Mammary epithelial cell (primary cell): ENCODE measurements at regions of chr1 and their contacts with region 1.

Region 1: DNA sequence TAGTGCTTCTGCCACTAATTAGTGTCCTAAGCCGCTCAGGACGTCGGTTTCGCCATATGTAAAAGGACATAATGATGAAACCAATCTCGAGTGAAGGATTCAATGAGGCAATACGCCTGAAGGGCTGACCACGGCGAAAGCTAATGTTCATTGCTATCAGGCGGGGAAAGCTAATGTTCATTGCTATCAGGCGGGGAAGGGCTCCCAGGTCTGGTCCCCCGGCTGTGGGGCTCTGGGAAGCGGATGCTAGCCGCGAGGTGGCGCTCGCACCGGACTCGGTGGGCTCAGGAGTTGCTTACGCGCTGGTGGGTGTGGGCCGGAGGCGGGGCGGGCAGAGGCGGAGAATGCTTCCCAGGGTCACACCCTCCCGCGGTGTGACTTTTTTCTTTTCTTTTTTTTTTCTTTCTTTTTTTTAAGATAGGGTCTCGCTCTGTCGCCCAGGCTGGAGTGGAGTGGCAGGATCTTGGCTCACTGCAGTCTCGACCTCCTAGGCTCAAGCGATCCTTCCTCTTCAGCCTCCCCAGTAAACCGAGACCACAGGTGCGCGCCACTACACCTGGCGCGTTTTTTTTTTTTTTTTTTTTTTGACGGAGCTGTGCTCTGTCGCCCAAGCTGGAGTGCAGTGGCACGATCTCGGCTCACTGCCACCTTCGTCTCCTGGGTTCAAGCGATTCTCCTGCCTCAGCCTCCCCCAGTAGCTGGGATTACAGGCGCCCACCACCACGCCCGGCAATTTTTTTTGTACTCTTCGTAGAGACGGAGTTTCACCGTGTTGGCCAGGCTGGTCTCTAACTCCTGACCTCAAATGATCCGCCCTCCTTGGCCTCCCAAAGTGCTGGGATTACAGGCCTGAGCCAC is 1.1 kb upstream of the PEAR1 start:
- DNase-seq: peak; percentile 61
- H3K4me3 ChIP-seq: peak overlapping the region; percentile 7 to 43 (median 11)
- H3K27ac ChIP-seq: no peak overlapping the region
- H3K4me1 ChIP-seq: peaks cover 30% of the 10 kb centered on the region
- H3K27me3 ChIP-seq: no peaks in the 10 kb centered on the region
- CTCF ChIP-seq: peak; percentile 63 to 84

Region 2: GRCh38 chr1:156689035-156689952 is 203.1 kb before region 1 on chr1:
- CTCF ChIA-PET with region 1: interaction called, 4 read pairs
- dilution Hi-C with region 1: no loop called
- in situ Hi-C with region 1: no loop called
- intact Hi-C with region 1: loop called (anchors 1 kb)
- DNase-seq: peak; percentile 77
- H3K4me3 ChIP-seq: peak overlapping the region in 1 of 3 experiments; percentile 27
- H3K27ac ChIP-seq: no peak overlapping the region
- H3K4me1 ChIP-seq: peaks cover 49% of the 10 kb centered on the region
- H3K27me3 ChIP-seq: no peaks in the 10 kb centered on the region
- CTCF ChIP-seq: peak; percentile 85 to 94

Region 3: DNA sequence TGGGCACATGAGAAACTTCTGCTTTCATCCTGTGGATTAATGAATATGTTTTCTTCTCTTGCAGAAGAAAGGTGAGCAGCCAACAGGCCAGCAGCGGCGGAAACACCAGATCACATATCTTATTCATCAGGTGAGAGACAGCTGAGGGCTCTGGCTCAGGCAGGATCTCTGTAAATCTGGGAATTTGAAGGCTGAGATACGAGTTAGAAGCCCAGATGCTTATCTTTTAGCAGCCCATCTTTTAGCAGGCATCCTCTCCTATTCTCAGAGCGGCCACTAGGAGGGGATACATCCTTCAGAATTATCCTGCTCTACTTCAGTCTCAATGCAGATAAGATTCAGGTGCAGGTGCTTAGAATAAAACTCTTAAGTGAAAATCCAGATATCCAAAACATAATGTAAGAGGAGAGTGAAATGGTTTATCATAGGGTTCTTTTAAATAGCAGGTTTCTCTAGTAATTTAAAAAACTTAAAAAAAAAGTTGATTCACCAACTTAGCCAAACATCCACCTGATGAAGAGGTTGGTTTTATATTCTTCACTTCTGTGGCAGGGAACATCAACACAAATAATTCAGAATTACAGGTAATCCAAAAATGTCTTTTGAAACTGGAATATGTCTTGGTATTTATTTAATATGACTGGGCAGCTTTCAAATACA is 95.1 kb before region 1 on chr1:
- CTCF ChIA-PET with region 1: no interaction called
- dilution Hi-C with region 1: no loop called
- in situ Hi-C with region 1: no loop called
- intact Hi-C with region 1: loop called (anchors 1 kb)
- DNase-seq: peak; percentile 47
- H3K4me3 ChIP-seq: no peak overlapping the region
- H3K27ac ChIP-seq: no peak overlapping the region
- H3K4me1 ChIP-seq: no peaks in the 10 kb centered on the region
- H3K27me3 ChIP-seq: no peaks in the 10 kb centered on the region
- CTCF ChIP-seq: peak; percentile 83 to 94

Region 4: DNA sequence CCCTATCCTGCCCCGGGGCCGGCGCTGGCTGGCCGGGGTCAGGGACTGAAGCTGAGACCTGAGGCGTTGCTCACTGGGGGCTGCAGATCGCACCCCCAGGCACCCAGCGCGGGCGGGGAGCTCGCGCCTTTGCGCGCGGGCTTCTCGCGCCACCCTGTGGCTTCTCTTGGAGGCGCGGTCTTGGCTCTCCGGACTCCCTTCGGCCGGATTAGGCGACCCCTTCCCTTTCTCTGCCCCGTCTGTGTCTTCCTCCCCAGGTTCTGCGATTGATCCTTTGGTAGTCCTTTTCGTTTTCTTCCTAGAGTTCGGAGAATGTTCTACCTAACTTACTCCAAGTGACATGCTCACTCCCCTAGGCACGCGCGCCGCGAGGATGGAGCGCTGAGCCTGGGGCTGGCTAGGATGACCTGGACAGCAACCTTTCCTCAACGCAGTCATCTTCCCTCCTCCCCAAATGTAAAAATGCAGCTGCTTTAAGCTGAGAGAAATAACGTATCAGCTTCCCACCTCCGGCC is 32.2 kb before region 1 on chr1:
- CTCF ChIA-PET with region 1: no interaction called
- dilution Hi-C with region 1: no loop called
- in situ Hi-C with region 1: no loop called
- intact Hi-C with region 1: loop called (anchors 1 kb)
- DNase-seq: peak; percentile 49
- H3K4me3 ChIP-seq: peak overlapping the region; percentile 31 to 46 (median 38)
- H3K27ac ChIP-seq: no peak overlapping the region
- H3K4me1 ChIP-seq: peaks cover 10% of the 10 kb centered on the region
- H3K27me3 ChIP-seq: peaks cover 27% of the 10 kb centered on the region
- CTCF ChIP-seq: peak; percentile 57 to 83

Region 5: GRCh38 chr1:156876281-156876680 is 16.1 kb before region 1 on chr1:
- CTCF ChIA-PET with region 1: no interaction called
- dilution Hi-C with region 1: no loop called
- in situ Hi-C with region 1: no loop called
- intact Hi-C with region 1: no loop called
- DNase-seq: no peak
- H3K4me3 ChIP-seq: no peak overlapping the region
- H3K27ac ChIP-seq: no peak overlapping the region
- H3K4me1 ChIP-seq: no peaks in the 10 kb centered on the region
- H3K27me3 ChIP-seq: no peaks in the 10 kb centered on the region
- CTCF ChIP-seq: no peak

Region 6: DNA sequence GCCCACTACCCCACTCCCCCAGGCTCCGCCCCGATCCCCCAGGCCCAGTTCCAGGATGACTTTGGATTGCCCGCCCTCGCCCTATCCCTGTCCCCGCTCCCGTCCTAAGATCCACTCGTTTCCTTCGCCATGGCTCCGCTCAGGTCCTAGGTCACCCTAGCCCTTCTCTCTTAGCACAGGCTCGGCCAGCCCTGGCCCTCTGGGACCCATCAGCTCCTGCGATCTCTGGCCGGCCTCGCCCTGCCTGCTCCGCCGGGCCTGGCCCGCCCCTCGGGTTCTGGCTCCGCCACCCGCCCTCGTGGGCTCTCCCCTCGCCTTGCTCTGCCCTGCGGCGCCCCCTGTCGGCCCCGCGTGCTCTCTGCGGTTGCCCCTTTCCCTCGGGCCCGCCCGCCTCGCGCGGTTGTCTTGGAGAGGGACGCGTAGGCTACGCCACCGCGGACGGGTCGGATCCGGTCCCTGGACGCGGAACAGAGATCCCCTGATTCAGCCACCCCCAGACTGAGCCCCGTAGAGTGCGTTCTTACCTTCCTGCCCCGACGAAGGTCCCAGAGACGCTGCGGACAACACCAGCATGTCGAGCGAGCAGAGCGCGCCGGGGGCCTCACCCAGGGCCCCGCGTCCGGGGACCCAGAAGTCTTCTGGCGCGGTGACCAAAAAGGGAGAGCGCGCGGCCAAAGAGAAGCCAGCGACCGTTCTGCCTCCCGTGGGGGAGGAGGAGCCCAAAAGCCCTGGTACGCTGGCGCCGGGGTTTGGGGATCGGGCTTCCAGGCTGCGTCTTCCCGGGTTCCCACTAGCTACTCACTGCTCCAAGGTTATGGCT is 28.0 kb after region 1 on chr1 and contains the start of gene LRRC71:
- CTCF ChIA-PET with region 1: no interaction called
- dilution Hi-C with region 1: no loop called
- in situ Hi-C with region 1: no loop called
- intact Hi-C with region 1: loop called (anchors 1 kb)
- DNase-seq: peak; percentile 48
- H3K4me3 ChIP-seq: peak within 1 kb of the TSS in 2 of 3 experiments; percentile 34 to 44
- H3K27ac ChIP-seq: no peak within 1 kb of the TSS
- H3K4me1 ChIP-seq: peaks cover 7% of the 10 kb centered on the region
- H3K27me3 ChIP-seq: peaks cover 45% of the 10 kb centered on the region
- CTCF ChIP-seq: peak; percentile 71 to 88
- total RNA-seq, gene LRRC71: not detected

Region 7: GRCh38 chr1:156948708-156949107 is 56.3 kb after region 1 on chr1:
- CTCF ChIA-PET with region 1: no interaction called
- dilution Hi-C with region 1: loop called (anchors 5 kb)
- in situ Hi-C with region 1: no loop called
- intact Hi-C with region 1: no loop called
- DNase-seq: no peak
- H3K4me3 ChIP-seq: no peak overlapping the region
- H3K27ac ChIP-seq: no peak overlapping the region
- H3K4me1 ChIP-seq: no peaks in the 10 kb centered on the region
- H3K27me3 ChIP-seq: no peaks in the 10 kb centered on the region
- CTCF ChIP-seq: peak; percentile 1 to 19

Region 8: DNA sequence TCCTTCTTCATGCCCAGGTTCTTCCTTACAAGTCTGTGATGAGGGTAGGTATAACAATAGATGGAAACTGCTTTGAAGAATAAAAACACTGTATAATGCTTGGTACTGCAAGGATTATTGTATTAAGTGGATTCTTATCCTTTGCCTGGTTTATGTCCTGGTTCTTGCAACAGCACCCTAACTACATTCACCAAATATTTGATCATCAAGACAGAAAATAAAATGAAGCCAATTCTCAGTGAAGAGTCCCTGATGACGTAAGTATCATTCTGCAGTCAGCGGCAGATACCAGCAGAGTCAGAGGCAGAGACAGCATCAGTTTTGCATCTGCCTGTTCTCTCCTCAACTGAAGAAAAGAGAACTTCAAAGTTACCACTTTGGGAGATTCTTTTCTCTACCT is 133.4 kb after region 1 on chr1:
- CTCF ChIA-PET with region 1: no interaction called
- dilution Hi-C with region 1: no loop called
- in situ Hi-C with region 1: no loop called
- intact Hi-C with region 1: no loop called
- DNase-seq: no peak
- H3K4me3 ChIP-seq: no peak overlapping the region
- H3K27ac ChIP-seq: no peak overlapping the region
- H3K4me1 ChIP-seq: no peaks in the 10 kb centered on the region
- H3K27me3 ChIP-seq: no peaks in the 10 kb centered on the region
- CTCF ChIP-seq: no peak

Region 9: GRCh38 chr1:157138220-157139051 is 246.0 kb after region 1 on chr1 and contains the start of gene ETV3:
- CTCF ChIA-PET with region 1: no interaction called
- dilution Hi-C with region 1: no loop called
- in situ Hi-C with region 1: no loop called
- intact Hi-C with region 1: loop called (anchors 10 kb)
- DNase-seq: peak; percentile 95
- H3K4me3 ChIP-seq: peak within 1 kb of the TSS; percentile 91 to 96 (median 93)
- H3K27ac ChIP-seq: peak within 1 kb of the TSS; percentile 81
- H3K4me1 ChIP-seq: peaks cover 40% of the 10 kb centered on the region
- H3K27me3 ChIP-seq: no peaks in the 10 kb centered on the region
- CTCF ChIP-seq: no peak
- total RNA-seq, gene ETV3: 20.5 to 34.1 TPM